ENCODE measurements at regions of chr7 and their contacts with region 1.

Region 1: DNA sequence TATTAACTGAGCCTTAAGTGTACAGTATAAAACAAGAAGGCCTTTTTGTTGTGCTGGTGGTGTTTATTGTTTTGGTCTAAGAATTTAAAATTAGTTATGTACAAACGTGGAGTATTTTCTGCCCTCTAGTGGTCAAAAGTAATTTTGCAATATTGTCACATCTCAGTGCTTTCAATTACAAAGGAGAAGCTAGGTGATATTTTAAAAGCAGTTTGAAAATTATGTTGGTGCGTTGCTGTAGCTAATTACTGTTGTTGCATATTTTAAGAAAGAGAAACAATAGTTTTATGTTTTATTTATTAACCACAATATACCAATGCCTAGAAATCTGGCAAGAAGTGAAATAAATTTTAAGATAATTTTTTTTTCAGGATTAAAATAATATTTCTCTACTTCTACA is 11.4 kb downstream of the NPVF start:
- DNase-seq: peak; percentile 60
- H3K4me3 ChIP-seq: no peak overlapping the region
- H3K27ac ChIP-seq: no peak overlapping the region
- H3K4me1 ChIP-seq: no peaks in the 10 kb centered on the region
- H3K27me3 ChIP-seq: peaks cover 2 to 4% of the 10 kb centered on the region in 2 experiments
- CTCF ChIP-seq: peak; percentile 45 to 56
- POLR2A ChIP-seq: no peak

Region 2: GRCh38 chr7:25179771-25180591 is 36.9 kb before region 1 on chr7:
- CTCF ChIA-PET with region 1: interaction called, 19 read pairs
- POLR2A ChIA-PET with region 1: no interaction called
- dilution Hi-C with region 1: no loop called
- intact Hi-C with region 1: loop called (anchors 2 kb)
- DNase-seq: peak; percentile 83
- H3K4me3 ChIP-seq: peak overlapping the region; percentile 46 to 62 (median 56)
- H3K27ac ChIP-seq: no peak overlapping the region
- H3K4me1 ChIP-seq: peaks cover 8% of the 10 kb centered on the region
- H3K27me3 ChIP-seq: peaks cover 1 to 7% of the 10 kb centered on the region in 2 experiments
- CTCF ChIP-seq: peak; percentile 51 to 82
- POLR2A ChIP-seq: no peak

Region 3: DNA sequence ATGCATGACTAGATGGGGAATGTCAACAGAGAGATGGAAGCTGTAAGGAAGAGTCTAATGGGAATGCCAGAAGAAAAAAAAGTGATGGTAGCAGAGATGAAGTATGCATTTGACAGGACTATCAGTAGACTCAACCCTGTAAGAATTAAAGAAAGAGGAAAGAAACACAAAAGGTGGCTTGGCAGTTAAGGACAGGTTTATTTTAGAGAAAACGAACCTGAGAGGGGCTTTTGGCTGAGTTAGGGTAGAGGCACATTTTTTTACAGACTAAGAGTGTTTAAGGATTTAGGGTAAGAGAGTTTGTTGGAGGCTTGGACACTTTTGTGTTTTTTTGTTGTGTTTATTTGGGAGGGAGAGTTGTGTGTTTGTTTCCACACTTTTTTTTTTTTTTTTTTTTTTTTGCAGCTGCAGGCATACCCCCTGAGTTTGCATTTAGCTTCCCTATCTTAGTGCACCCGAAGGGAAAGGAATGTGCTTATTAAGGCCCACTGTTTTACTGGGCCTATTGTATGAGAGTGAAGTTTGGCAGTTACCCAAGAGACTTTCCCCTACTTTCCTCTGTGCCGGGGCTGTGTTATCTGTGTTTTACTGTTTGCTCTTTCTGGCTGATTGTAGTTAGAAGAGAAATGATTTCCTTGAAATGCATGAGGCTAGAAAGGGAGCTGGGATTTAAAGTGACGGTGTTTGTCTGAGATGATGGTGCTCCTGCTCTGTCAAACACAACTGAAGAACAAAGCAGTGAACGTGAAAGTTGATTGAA is 20.5 kb before region 1 on chr7:
- CTCF ChIA-PET with region 1: interaction called, 17 read pairs
- POLR2A ChIA-PET with region 1: no interaction called
- dilution Hi-C with region 1: no loop called
- intact Hi-C with region 1: no loop called
- DNase-seq: peak; percentile 44
- H3K4me3 ChIP-seq: no peak overlapping the region
- H3K27ac ChIP-seq: no peak overlapping the region
- H3K4me1 ChIP-seq: no peaks in the 10 kb centered on the region
- H3K27me3 ChIP-seq: no peaks in the 10 kb centered on the region
- CTCF ChIP-seq: no peak
- POLR2A ChIP-seq: no peak

Region 4: DNA sequence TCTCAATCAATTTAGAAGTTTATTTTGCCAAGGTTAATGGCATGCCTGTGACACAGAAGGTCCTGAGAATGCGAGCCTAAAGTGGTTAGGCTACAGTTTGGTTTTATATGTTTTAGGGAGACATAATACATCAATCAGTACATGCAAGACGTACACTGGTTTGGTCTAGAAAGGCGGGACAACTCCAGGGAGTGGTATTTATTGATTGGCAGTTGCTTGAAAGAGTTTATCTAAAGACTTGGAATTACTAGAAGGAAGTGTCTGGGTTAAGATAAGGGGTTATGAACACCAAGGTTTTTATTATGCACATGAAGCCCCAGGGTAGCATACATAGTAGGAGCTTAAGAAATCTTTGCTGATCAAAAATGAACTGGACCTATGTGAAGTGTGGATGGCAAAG is 10.1 kb before region 1 on chr7:
- CTCF ChIA-PET with region 1: interaction called, 22 read pairs
- POLR2A ChIA-PET with region 1: no interaction called
- dilution Hi-C with region 1: no loop called
- intact Hi-C with region 1: no loop called
- DNase-seq: no peak
- H3K4me3 ChIP-seq: no peak overlapping the region
- H3K27ac ChIP-seq: no peak overlapping the region
- H3K4me1 ChIP-seq: no peaks in the 10 kb centered on the region
- H3K27me3 ChIP-seq: no peaks in the 10 kb centered on the region
- CTCF ChIP-seq: no peak
- POLR2A ChIP-seq: no peak

Region 5: DNA sequence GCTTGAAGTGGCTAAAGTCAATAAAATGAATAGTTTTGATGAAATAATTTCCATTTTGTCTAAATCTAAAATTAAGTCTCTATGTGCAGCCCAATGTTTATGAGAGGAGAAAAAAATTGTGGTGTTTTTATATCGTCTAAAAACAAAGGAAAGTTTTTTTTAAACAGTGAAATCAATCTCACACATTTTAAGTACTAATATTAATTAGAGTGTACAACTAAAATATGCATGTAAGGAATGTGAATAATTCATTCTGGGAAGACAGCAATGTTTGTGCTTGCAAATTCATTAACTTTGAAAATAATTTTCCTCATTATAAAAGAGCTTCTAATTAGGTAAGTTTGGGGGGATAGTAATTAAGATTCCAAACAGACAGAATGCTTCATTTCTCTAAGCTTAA is 11.5 kb after region 1 on chr7 and contains the start of gene NPVF:
- CTCF ChIA-PET with region 1: interaction called, 40 read pairs
- POLR2A ChIA-PET with region 1: no interaction called
- dilution Hi-C with region 1: no loop called
- intact Hi-C with region 1: no loop called
- DNase-seq: no peak
- H3K4me3 ChIP-seq: no peak within 1 kb of the TSS
- H3K27ac ChIP-seq: no peak within 1 kb of the TSS
- H3K4me1 ChIP-seq: no peaks in the 10 kb centered on the region
- H3K27me3 ChIP-seq: no peaks in the 10 kb centered on the region
- CTCF ChIP-seq: no peak
- POLR2A ChIP-seq: no peak
- total RNA-seq, gene NPVF: not detected in 2 replicates

Region 6: DNA sequence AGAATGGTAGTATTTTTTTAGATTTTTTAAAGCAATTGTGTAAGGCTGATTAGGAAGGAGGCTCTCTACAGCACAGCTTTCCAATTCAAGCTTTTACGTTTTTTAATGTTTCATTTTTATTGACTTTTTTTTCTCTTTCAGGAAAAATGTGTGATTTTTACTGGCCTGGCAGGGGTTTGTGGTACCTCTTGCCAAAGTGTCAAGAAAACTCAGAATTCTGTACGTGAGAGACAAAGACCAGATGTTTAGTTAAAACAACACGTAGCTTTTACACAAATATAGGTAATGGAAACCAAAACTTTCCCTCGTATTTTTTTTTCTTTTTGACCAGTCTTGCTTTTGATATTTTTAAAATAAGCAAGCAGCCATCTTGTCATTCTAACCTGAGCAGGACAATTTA is 17.5 kb after region 1 on chr7:
- CTCF ChIA-PET with region 1: interaction called, 40 read pairs
- POLR2A ChIA-PET with region 1: no interaction called
- dilution Hi-C with region 1: no loop called
- intact Hi-C with region 1: no loop called
- DNase-seq: no peak
- H3K4me3 ChIP-seq: no peak overlapping the region
- H3K27ac ChIP-seq: no peak overlapping the region
- H3K4me1 ChIP-seq: no peaks in the 10 kb centered on the region
- H3K27me3 ChIP-seq: no peaks in the 10 kb centered on the region
- CTCF ChIP-seq: no peak
- POLR2A ChIP-seq: no peak

Region 7: GRCh38 chr7:25240340-25240739 is 23.5 kb after region 1 on chr7:
- CTCF ChIA-PET with region 1: interaction called, 10 read pairs
- POLR2A ChIA-PET with region 1: no interaction called
- dilution Hi-C with region 1: no loop called
- intact Hi-C with region 1: no loop called
- DNase-seq: no peak
- H3K4me3 ChIP-seq: no peak overlapping the region
- H3K27ac ChIP-seq: no peak overlapping the region
- H3K4me1 ChIP-seq: no peaks in the 10 kb centered on the region
- H3K27me3 ChIP-seq: peaks cover 0 to 3% of the 10 kb centered on the region in 2 experiments
- CTCF ChIP-seq: no peak
- POLR2A ChIP-seq: no peak

Region 8: DNA sequence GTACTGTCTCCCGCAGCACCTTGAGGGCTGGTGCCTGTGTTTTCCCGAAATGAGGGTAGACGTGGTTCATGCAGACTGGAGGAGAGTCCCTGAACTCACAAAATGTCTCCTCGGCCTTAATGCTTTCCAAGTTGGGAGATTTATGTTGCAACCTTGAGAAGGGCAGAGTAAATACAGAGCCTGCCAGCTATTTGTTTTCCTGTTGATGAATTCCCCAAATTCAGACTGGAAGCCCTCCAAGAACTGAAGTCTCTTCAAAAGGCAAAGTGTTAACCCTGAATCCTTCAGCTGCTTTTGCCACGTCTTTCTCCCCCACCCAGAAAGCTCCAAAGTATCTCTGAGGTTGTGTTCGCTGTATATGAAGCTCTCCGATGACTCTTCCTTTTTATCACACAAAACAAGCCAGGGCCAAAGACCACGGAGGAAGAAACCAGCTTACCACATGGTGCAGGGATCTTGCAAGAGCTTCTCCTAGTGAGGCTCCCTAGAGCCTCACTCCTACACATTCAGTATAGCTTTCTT is 680.5 kb after region 1 on chr7:
- CTCF ChIA-PET with region 1: no interaction called
- POLR2A ChIA-PET with region 1: no interaction called
- dilution Hi-C with region 1: no loop called
- intact Hi-C with region 1: no loop called
- DNase-seq: no peak
- H3K4me3 ChIP-seq: no peak overlapping the region
- H3K27ac ChIP-seq: no peak overlapping the region
- H3K4me1 ChIP-seq: peaks cover 16% of the 10 kb centered on the region
- H3K27me3 ChIP-seq: peaks cover 0 to 6% of the 10 kb centered on the region in 2 experiments
- CTCF ChIP-seq: no peak
- POLR2A ChIP-seq: no peak